Common myeloid progenitor, CD34-positive (primary cell): ENCODE measurements at regions of chr10 and their contacts with region 1.

Region 1: DNA sequence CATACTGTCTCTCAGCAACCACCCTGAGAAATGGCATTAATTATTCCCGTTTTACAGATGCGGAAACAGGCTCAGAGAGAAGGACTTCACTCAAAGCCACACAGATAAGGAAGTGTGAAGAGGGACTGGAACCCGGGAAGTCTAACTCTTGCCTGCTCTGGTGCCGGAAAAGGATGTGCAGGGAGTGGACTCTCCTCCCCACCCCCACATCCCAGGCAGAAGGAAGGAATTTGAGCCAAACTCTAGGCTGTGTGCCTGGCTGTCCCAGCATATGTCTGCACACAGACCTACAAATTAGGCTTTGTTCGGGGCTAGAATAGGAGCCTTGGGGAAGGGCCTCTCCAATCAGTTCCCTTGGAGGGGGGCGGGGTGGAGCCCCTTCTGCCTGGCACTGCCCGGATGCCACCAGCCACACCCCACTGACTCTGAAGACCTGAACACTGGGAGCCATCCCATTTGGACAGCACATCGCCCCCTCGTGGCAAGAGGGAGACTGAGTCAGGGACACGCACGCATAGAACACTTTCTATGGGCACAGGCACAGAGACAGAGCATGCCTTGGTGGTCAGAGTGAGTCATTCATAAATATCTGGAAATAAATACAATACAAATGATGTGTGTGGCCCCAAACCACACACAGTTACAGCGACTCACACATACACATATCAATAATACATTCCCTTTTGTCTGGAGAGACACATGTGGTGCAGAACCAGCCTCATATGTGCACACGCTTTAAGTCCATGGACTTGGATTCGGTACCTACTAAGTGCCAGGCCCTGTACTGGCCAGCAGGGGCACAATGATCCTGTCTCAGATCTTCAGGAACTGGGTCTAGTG is 13.1 kb downstream of the LZTS2 start:
- DNase-seq: peak; percentile 87 to 90 (median 90)
- H3K4me3 ChIP-seq: no peak overlapping the region
- H3K27ac ChIP-seq: no peak overlapping the region
- H3K4me1 ChIP-seq: peaks cover 0 to 16% (median 14%) of the 10 kb centered on the region in 4 experiments
- H3K27me3 ChIP-seq: peaks cover 0 to 15% (median 3%) of the 10 kb centered on the region in 5 experiments

Region 2: DNA sequence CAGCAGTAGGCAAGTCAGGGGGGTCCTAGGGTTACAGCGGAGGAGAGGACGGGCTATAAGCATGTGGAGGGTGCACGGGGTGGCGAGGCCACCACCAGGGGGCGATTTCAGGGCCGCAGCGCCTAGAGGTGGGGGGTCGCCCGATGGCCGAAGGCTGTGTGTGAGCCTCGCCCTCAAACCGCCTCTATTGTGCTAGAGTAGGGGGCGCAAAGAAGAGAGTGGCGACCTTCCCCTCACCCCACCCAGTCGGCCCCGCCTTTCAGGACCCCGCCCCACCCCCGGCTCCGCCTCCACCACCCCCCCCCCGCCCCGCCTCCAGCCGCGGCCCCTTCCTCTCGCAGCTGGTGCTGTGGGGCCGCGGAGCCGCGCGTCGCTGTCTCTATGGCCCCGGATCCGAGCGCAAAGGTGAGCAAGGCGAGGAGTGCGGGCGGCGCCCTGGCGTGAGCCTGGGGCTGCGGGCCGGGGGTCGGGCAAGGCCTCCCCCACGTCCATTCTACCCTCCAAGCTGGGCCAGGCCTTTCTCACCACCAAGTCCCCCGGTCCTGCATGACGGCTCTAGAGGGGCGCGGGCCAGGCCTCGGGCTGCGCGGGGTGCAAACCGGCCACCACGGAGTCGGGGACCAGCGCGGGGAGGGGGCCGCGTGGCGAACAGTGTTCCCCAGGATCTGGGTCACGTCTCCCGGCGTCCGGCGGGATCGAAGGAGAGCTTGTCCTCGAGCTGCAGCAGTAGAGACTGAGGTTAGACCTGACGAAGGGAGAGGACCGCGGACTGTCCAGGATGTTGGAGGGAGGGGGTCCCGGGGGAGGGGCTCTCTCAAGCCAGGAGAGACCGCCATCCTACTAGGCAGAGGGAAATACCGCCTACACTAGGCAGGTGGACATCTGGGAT is 43.3 kb before region 1 on chr10 and contains the start of gene SEMA4G:
- CTCF ChIA-PET with region 1: interaction called, 82 read pairs
- POLR2A ChIA-PET with region 1: no interaction called
- DNase-seq: peak; percentile 52 to 70 (median 62)
- H3K4me3 ChIP-seq: peak within 1 kb of the TSS; percentile 23 to 79 (median 54)
- H3K27ac ChIP-seq: no peak within 1 kb of the TSS
- H3K4me1 ChIP-seq: peaks cover 0 to 19% (median 13%) of the 10 kb centered on the region in 4 experiments
- H3K27me3 ChIP-seq: peaks cover 0 to 4% (median 2%) of the 10 kb centered on the region in 5 experiments

Region 3: GRCh38 chr10:100979791-100980272 is 32.9 kb before region 1 on chr10:
- CTCF ChIA-PET with region 1: interaction called, 6 read pairs
- POLR2A ChIA-PET with region 1: interaction called, 11 read pairs
- DNase-seq: no peak
- H3K4me3 ChIP-seq: no peak overlapping the region
- H3K27ac ChIP-seq: no peak overlapping the region
- H3K4me1 ChIP-seq: no peaks in the 10 kb centered on the region
- H3K27me3 ChIP-seq: no peaks in the 10 kb centered on the region

Region 4: GRCh38 chr10:100998991-100999741 is 13.6 kb before region 1 on chr10:
- CTCF ChIA-PET with region 1: interaction called, 311 read pairs
- POLR2A ChIA-PET with region 1: interaction called, 5 read pairs
- DNase-seq: peak; percentile 70 to 81 (median 81)
- H3K4me3 ChIP-seq: peak overlapping the region; percentile 76 to 93 (median 84)
- H3K27ac ChIP-seq: peak overlapping the region; percentile 79 to 90
- H3K4me1 ChIP-seq: peaks cover 0 to 60% (median 50%) of the 10 kb centered on the region in 4 experiments
- H3K27me3 ChIP-seq: no peaks in the 10 kb centered on the region